PC-9 (cell line): ENCODE measurements at regions of chr6 and their contacts with region 1.

Region 1: GRCh38 chr6:9503111-9503761 is 911.6 kb downstream of the TFAP2A start:
- DNase-seq: peak; percentile 42 to 78
- H3K4me3 ChIP-seq: no peak overlapping the region
- H3K27ac ChIP-seq: 0 out of 2 replicates have a peak overlapping the region, but pooled peaks have one; percentile 37
- H3K4me1 ChIP-seq: no peaks in the 10 kb centered on the region; the same call in 1 of the 2 replicates
- H3K27me3 ChIP-seq: no peaks in the 10 kb centered on the region
- CTCF ChIP-seq: no peak

Region 2: DNA sequence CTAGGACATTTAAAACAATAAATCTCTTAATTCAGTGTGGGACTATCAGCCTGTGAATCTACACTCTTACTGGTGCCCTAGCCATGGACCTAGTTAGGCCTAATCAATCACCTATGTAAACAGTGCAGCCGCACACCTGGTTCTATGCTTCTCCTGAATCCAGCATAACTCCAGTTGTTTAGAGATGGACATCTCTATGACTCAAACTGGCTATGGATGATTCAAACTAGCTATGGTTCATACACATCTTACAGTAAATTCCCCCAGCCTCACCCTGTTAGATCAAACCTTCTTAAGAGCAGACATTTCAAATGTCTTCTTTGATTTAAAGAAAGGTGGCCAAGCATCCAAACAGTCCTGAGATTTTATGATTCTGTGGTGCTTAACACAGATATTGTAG is 1102.6 kb before region 1 on chr6:
- CTCF ChIA-PET with region 1: no interaction called
- POLR2A ChIA-PET with region 1: no interaction called
- intact Hi-C with region 1: no loop called
- DNase-seq: no peak
- H3K4me3 ChIP-seq: no peak overlapping the region
- H3K27ac ChIP-seq: no peak overlapping the region
- H3K4me1 ChIP-seq: no peaks in the 10 kb centered on the region
- H3K27me3 ChIP-seq: no peaks in the 10 kb centered on the region
- CTCF ChIP-seq: no peak

Region 3: DNA sequence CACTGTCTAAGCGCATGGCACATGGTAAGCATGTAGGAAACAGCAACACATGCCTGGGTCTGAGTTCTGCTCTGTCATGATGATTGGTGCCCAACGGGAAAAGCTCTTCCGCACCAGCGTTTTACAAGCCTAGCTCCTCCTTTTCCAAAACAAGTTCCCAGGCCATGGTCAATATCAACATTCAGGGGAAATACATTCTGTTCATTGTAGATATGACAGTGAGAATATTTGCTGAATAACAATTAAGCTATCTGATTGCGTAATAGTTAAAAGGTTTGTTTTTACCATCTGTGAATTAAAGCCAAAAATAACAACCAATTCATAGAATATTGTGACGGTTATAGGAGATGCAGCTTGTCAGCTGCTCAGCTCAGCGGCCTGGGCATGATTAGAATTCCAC is 663.6 kb before region 1 on chr6:
- CTCF ChIA-PET with region 1: no interaction called
- POLR2A ChIA-PET with region 1: no interaction called
- intact Hi-C with region 1: no loop called
- DNase-seq: no peak
- H3K4me3 ChIP-seq: no peak overlapping the region
- H3K27ac ChIP-seq: no peak overlapping the region
- H3K4me1 ChIP-seq: no peaks in the 10 kb centered on the region
- H3K27me3 ChIP-seq: no peaks in the 10 kb centered on the region
- CTCF ChIP-seq: no peak

Region 4: DNA sequence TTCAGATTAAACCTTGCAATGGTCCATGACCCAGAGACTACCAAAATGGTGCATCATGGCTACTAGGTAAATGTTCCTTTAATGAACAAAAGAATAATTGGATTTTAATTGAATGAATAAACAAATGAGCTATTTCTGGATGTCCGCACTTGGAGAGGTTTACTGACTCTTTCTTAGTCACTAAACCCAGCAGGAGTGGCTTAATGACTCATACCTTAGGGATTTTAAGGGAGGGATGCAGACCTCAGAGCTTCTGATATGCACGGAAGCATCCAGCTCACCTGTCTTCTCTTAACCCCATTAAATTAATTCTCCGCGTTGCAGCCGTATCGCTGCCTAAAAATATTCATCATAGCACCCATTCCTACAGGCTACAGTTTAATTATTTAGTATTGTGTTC is 97.9 kb before region 1 on chr6:
- CTCF ChIA-PET with region 1: no interaction called
- POLR2A ChIA-PET with region 1: no interaction called
- intact Hi-C with region 1: loop called (anchors 1 kb)
- DNase-seq: peak; percentile 45 to 79
- H3K4me3 ChIP-seq: peak overlapping the region; percentile 31; the same call in 1 of the 2 replicates
- H3K27ac ChIP-seq: 0 out of 2 replicates have a peak overlapping the region, but pooled peaks have one; percentile 12
- H3K4me1 ChIP-seq: peaks cover 16% of the 10 kb centered on the region
- H3K27me3 ChIP-seq: no peaks in the 10 kb centered on the region
- CTCF ChIP-seq: no peak

Region 5: GRCh38 chr6:9420316-9421015 is 82.8 kb before region 1 on chr6:
- CTCF ChIA-PET with region 1: interaction called, 12 read pairs
- POLR2A ChIA-PET with region 1: no interaction called
- intact Hi-C with region 1: no loop called
- DNase-seq: no peak
- H3K4me3 ChIP-seq: no peak overlapping the region
- H3K27ac ChIP-seq: no peak overlapping the region
- H3K4me1 ChIP-seq: no peaks in the 10 kb centered on the region
- H3K27me3 ChIP-seq: no peaks in the 10 kb centered on the region
- CTCF ChIP-seq: no peak

Region 6: DNA sequence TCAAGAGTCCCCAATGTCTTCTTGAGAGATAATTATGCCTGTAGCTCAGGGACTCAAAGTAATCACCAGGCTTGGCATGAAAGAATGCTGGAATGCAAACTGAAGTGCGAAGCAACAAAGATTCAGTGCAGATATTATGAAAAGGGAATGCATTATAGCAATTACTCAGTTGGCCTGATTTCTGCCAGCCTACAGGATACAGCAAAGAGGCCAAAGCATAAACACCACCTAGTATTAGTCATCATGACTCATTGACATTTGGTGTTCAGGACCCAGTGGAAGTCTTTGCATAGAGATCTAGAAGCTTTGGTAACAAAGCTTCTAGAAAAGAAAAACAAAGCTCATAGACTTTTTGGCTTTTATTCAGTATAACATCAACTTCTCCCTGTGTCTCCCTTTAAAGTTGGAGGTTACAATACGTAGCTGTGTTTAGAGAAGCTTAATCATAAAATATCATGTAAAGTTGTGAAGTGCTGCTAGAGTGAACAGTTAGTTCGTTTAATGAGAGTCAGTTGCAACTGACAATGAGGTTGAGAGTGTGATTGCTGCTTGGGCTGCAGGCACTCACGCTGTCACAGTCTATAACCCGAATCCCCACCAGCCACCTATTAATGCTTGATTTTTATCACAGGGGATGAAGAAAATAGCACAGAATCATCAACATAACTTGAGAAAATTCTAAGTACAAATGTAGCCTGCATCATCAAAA is 21.1 kb before region 1 on chr6:
- CTCF ChIA-PET with region 1: no interaction called
- POLR2A ChIA-PET with region 1: no interaction called
- intact Hi-C with region 1: loop called (anchors 1 kb)
- DNase-seq: peak; percentile 55 to 83
- H3K4me3 ChIP-seq: no peak overlapping the region
- H3K27ac ChIP-seq: peak overlapping the region; percentile 36; the same call in 1 of the 2 replicates
- H3K4me1 ChIP-seq: peaks cover 20% of the 10 kb centered on the region
- H3K27me3 ChIP-seq: no peaks in the 10 kb centered on the region
- CTCF ChIP-seq: no peak

Region 7: GRCh38 chr6:9492790-9493189 is 10.4 kb before region 1 on chr6:
- CTCF ChIA-PET with region 1: no interaction called
- POLR2A ChIA-PET with region 1: no interaction called
- intact Hi-C with region 1: no loop called
- DNase-seq: no peak
- H3K4me3 ChIP-seq: no peak overlapping the region
- H3K27ac ChIP-seq: no peak overlapping the region
- H3K4me1 ChIP-seq: no peaks in the 10 kb centered on the region
- H3K27me3 ChIP-seq: no peaks in the 10 kb centered on the region
- CTCF ChIP-seq: no peak

Region 8: DNA sequence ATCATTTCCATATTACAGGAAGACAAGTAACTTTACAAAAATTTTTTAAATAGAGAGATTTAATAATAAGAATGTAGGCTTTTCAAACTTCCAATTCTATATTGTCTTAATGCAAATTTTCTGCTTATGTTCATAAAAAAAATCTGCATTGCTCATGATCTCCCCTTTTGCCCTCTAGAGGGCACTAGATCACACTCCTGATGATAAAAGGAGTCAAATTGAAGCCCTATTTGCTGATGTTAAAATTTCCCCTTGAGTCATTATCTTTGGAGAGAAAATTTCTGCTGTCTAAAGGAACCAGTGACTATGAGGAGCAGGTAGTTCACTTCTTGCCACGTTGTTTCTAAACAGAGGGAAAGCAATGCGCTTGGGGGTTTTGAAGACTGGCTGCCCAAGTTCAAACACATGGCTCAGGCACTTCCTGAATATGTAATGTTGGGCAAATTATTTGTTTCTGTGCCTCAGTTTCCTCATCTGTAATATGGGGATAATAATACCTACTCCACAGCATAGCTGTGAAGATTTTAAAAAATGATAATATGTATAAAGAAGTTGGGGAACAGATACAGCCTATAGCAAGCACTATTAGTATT is 37.4 kb after region 1 on chr6:
- CTCF ChIA-PET with region 1: no interaction called
- POLR2A ChIA-PET with region 1: no interaction called
- intact Hi-C with region 1: loop called (anchors 2 kb)
- DNase-seq: peak; percentile 22 to 38
- H3K4me3 ChIP-seq: no peak overlapping the region
- H3K27ac ChIP-seq: no peak overlapping the region
- H3K4me1 ChIP-seq: no peaks in the 10 kb centered on the region
- H3K27me3 ChIP-seq: no peaks in the 10 kb centered on the region
- CTCF ChIP-seq: peak; percentile 73

Region 9: GRCh38 chr6:10411971-10412745 is 908.9 kb after region 1 on chr6:
- CTCF ChIA-PET with region 1: no interaction called
- POLR2A ChIA-PET with region 1: interaction called, 18 read pairs
- intact Hi-C with region 1: loop called (anchors 5 kb)
- DNase-seq: peak; percentile 59 to 79
- H3K4me3 ChIP-seq: peak overlapping the region; percentile 88
- H3K27ac ChIP-seq: peak overlapping the region; percentile 89
- H3K4me1 ChIP-seq: peaks cover 28% of the 10 kb centered on the region
- H3K27me3 ChIP-seq: no peaks in the 10 kb centered on the region
- CTCF ChIP-seq: no peak